ENCODE measurements at regions of chr6 and their contacts with region 1.

Region 1: DNA sequence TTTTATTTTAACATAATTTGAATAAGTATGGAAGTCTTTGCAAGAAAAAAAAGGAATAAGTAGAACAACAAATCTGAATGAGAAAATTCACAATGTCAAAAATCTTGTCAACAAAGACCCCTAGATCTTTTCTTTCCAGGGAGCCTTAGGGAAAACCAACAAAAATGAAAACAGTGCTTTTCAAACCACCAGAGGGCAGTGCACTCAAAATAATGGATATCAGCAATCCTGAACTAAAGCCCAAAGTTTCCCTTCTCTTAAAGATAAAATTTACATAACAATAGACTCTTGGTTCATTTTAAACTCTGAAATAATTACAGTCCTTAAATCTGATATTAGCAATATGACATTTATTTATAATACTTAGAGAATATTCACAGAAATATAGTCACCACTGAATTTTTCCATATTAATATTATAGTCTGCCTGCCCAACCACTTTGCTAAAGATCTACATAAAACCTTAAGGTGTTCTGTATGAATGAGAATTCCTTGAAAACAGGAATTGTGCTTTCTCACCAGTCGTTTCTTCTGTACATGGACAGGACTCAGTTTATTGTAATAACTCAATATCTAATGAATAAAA is 105.3 kb upstream of the BMP5 start:
- DNase-seq: peak; percentile 41
- ATAC-seq: peak; percentile 56; the same call in 1 of the 2 replicates
- H3K4me3 ChIP-seq: no peak overlapping the region
- H3K27ac ChIP-seq: no peak overlapping the region
- H3K4me1 ChIP-seq: no peaks in the 10 kb centered on the region
- H3K27me3 ChIP-seq: peaks cover 4% of the 10 kb centered on the region
- CTCF ChIP-seq: peak; percentile 76
- POLR2A ChIP-seq: no peak
- RAD21 ChIP-seq: peak; percentile 80

Region 2: GRCh38 chr6:56292505-56293181 is 311.9 kb after region 1 on chr6:
- CTCF ChIA-PET with region 1: interaction called, 8 read pairs
- POLR2A ChIA-PET with region 1: no interaction called
- dilution Hi-C with region 1: no loop called
- in situ Hi-C with region 1: loop called (anchors 5 kb)
- intact Hi-C with region 1: loop called (anchors 1 kb)
- DNase-seq: peak; percentile 62
- ATAC-seq: peak; percentile 92
- H3K4me3 ChIP-seq: no peak overlapping the region
- H3K27ac ChIP-seq: no peak overlapping the region
- H3K4me1 ChIP-seq: no peaks in the 10 kb centered on the region
- H3K27me3 ChIP-seq: no peaks in the 10 kb centered on the region; the same call in 1 of the 2 replicates
- CTCF ChIP-seq: peak; percentile 79
- POLR2A ChIP-seq: no peak
- RAD21 ChIP-seq: peak; percentile 90

Region 3: GRCh38 chr6:56570413-56571359 is 590.0 kb after region 1 on chr6:
- CTCF ChIA-PET with region 1: no interaction called
- POLR2A ChIA-PET with region 1: no interaction called
- dilution Hi-C with region 1: no loop called
- in situ Hi-C with region 1: loop called (anchors 25 kb)
- intact Hi-C with region 1: no loop called
- DNase-seq: peak; percentile 39
- ATAC-seq: peak; percentile 70
- H3K4me3 ChIP-seq: no peak overlapping the region
- H3K27ac ChIP-seq: no peak overlapping the region
- H3K4me1 ChIP-seq: peaks cover 2% of the 10 kb centered on the region; the same call in 1 of the 2 replicates
- H3K27me3 ChIP-seq: no peaks in the 10 kb centered on the region
- CTCF ChIP-seq: peak; percentile 44
- POLR2A ChIP-seq: no peak
- RAD21 ChIP-seq: peak; percentile 44; the same call in 1 of the 2 replicates

Measured in IMR-90 (cell line).